PC-3 (cell line): ENCODE measurements at regions of chr7 and their contacts with region 1.

Region 1: GRCh38 chr7:83271212-83272099 is 108.8 kb upstream of the PCLO start:
- DNase-seq: peak; percentile 52
- ATAC-seq: peak; percentile 70
- H3K4me3 ChIP-seq: no peak overlapping the region
- H3K27ac ChIP-seq: no peak overlapping the region
- H3K4me1 ChIP-seq: no peaks in the 10 kb centered on the region
- H3K27me3 ChIP-seq: 0 out of 2 replicates have a peak, but pooled peaks cover 3% of the 10 kb centered on the region
- CTCF ChIP-seq: peak; percentile 71

Region 2: GRCh38 chr7:82740246-82740848 is 531.1 kb before region 1 on chr7:
- CTCF ChIA-PET with region 1: no interaction called
- POLR2A ChIA-PET with region 1: no interaction called
- intact Hi-C with region 1: loop called (anchors 1 kb)
- DNase-seq: peak; percentile 73
- ATAC-seq: peak; percentile 84
- H3K4me3 ChIP-seq: no peak overlapping the region
- H3K27ac ChIP-seq: no peak overlapping the region
- H3K4me1 ChIP-seq: no peaks in the 10 kb centered on the region
- H3K27me3 ChIP-seq: no peaks in the 10 kb centered on the region
- CTCF ChIP-seq: peak; percentile 82

Region 3: GRCh38 chr7:83005410-83005809 is 266.0 kb before region 1 on chr7:
- CTCF ChIA-PET with region 1: no interaction called
- POLR2A ChIA-PET with region 1: no interaction called
- intact Hi-C with region 1: loop called (anchors 2 kb)
- DNase-seq: peak; percentile 60
- ATAC-seq: peak; percentile 39; the same call in 1 of the 2 replicates
- H3K4me3 ChIP-seq: no peak overlapping the region
- H3K27ac ChIP-seq: no peak overlapping the region
- H3K4me1 ChIP-seq: peaks cover 19% of the 10 kb centered on the region
- H3K27me3 ChIP-seq: no peaks in the 10 kb centered on the region
- CTCF ChIP-seq: peak; percentile 58

Region 4: GRCh38 chr7:83162402-83163256 is 108.8 kb before region 1 on chr7 and contains the start of gene PCLO:
- CTCF ChIA-PET with region 1: no interaction called
- POLR2A ChIA-PET with region 1: interaction called, 3 read pairs
- intact Hi-C with region 1: loop called (anchors 2 kb)
- DNase-seq: peak; percentile 96
- ATAC-seq: peak; percentile 89
- H3K4me3 ChIP-seq: peak within 1 kb of the TSS; percentile 95
- H3K27ac ChIP-seq: peak within 1 kb of the TSS; percentile 38; the same call in 1 of the 2 replicates
- H3K4me1 ChIP-seq: peaks cover 30% of the 10 kb centered on the region
- H3K27me3 ChIP-seq: no peaks in the 10 kb centered on the region
- CTCF ChIP-seq: no peak
- total RNA-seq, gene PCLO: 3.5 and 7.5 TPM in 2 replicates

Region 5: DNA sequence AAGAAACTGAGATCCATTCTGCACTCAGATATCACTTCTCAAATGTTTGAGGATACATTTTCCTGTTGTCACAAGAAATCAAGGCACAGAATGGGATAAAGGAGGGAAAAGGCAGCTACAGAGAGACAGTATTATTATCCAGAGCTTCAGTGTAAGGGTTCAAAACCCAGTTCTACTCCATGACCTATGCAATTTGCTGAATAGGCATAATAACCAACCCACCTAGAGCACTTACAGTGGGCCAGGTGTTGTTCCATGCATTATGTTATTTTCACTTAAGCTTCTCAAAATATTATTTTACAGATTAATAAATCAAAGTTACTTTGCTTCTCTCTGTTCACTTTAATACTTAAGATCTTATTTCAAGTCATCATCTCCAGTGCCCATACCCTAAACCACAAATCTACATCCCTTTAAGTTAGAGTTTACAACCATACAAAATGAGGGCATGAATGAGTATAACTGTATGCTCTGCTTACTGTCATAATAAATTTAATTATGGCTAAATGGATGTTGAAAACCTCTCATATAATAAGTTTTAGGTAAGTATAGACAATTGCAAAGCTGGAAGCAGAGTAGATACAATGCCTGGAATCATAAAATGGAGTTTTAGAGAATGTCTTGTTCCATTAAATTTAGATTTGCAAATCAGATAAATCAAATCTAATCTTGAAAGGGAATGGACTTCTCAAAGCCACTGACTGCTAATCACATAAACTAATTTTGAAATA is 80.6 kb before region 1 on chr7:
- CTCF ChIA-PET with region 1: no interaction called
- POLR2A ChIA-PET with region 1: no interaction called
- intact Hi-C with region 1: no loop called
- DNase-seq: no peak
- ATAC-seq: no peak
- H3K4me3 ChIP-seq: no peak overlapping the region
- H3K27ac ChIP-seq: no peak overlapping the region
- H3K4me1 ChIP-seq: no peaks in the 10 kb centered on the region
- H3K27me3 ChIP-seq: no peaks in the 10 kb centered on the region
- CTCF ChIP-seq: no peak

Region 6: GRCh38 chr7:83365746-83366145 is 94.3 kb after region 1 on chr7:
- CTCF ChIA-PET with region 1: no interaction called
- POLR2A ChIA-PET with region 1: no interaction called
- intact Hi-C with region 1: loop called (anchors 5 kb)
- DNase-seq: peak; percentile 19
- ATAC-seq: peak; percentile 43; the same call in 1 of the 2 replicates
- H3K4me3 ChIP-seq: no peak overlapping the region
- H3K27ac ChIP-seq: no peak overlapping the region
- H3K4me1 ChIP-seq: no peaks in the 10 kb centered on the region
- H3K27me3 ChIP-seq: no peaks in the 10 kb centered on the region
- CTCF ChIP-seq: peak; percentile 45; the same call in 1 of the 2 replicates

Region 7: DNA sequence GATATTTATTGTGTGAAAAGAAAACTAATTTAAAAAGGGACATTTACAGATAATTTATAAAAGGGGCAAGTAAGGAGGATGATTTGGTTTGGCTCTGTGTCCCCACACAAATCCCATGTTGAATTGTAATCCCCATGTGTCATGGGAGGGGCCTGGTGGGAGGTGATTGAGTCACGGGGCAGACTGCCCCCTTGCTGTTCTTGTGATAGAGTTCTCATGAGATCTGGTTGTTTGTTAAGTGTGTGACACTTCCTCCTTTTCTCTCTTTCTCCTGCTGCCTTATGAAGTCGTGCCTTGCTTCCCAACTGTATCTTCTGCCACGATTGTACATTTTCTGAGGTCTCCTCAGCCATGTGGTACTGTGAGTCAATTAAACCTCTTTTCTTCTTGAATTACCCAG is 548.5 kb after region 1 on chr7:
- CTCF ChIA-PET with region 1: no interaction called
- POLR2A ChIA-PET with region 1: no interaction called
- intact Hi-C with region 1: no loop called
- DNase-seq: no peak
- ATAC-seq: no peak
- H3K4me3 ChIP-seq: no peak overlapping the region
- H3K27ac ChIP-seq: no peak overlapping the region
- H3K4me1 ChIP-seq: peaks cover 25% of the 10 kb centered on the region
- H3K27me3 ChIP-seq: no peaks in the 10 kb centered on the region
- CTCF ChIP-seq: no peak